PC-9 (cell line): ENCODE measurements at regions of chr16 and their contacts with region 1.

Region 1: GRCh38 chr16:6663668-6664067 is 669.0 kb upstream of the RBFOX1 start:
- DNase-seq: no peak
- H3K4me3 ChIP-seq: no peak overlapping the region
- H3K27ac ChIP-seq: no peak overlapping the region
- H3K4me1 ChIP-seq: no peaks in the 10 kb centered on the region
- H3K27me3 ChIP-seq: peaks cover 41% of the 10 kb centered on the region
- CTCF ChIP-seq: no peak

Region 2: DNA sequence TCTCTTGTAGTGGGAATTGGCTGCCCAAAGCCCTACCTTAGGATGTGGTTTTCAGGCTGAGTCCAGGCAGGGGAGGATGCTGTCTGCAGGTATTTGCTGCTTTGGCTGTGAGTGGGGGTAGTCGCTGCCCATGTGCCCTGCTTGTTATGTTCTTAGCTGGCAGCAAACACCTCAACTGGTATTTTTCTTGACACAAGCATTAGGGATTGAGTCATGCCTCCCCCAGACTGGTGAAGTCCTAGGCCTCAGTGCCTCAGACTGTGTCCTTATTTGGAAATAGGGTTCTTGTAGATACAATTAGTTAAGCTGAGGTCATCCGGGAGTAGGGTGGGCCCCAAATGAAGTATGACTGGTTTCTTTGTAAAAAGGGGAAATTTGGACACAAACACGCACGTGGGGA is 757.7 kb before region 1 on chr16:
- CTCF ChIA-PET with region 1: no interaction called
- POLR2A ChIA-PET with region 1: no interaction called
- intact Hi-C with region 1: no loop called
- DNase-seq: no peak
- H3K4me3 ChIP-seq: no peak overlapping the region
- H3K27ac ChIP-seq: no peak overlapping the region
- H3K4me1 ChIP-seq: no peaks in the 10 kb centered on the region
- H3K27me3 ChIP-seq: peaks cover 21% of the 10 kb centered on the region
- CTCF ChIP-seq: no peak

Region 3: DNA sequence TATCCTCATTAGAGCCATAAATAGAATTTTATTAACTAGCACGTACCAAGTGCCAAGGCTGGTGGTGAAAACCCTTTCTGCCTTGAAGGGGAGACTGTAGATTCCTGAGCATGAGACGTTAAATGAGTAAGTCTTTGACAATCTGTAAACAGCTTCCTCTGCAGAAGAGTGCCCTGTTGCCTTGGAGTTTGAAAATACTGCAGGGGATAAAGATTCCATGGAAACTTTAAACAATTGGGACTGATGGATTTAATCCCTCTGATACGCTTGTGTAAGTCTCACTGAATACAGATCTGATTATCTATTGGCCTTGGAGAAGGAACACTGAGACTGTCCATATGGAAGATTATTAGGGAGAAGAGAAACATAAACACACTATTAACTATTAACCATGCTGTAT is 384.4 kb before region 1 on chr16:
- CTCF ChIA-PET with region 1: no interaction called
- POLR2A ChIA-PET with region 1: interaction called, 13 read pairs
- intact Hi-C with region 1: no loop called
- DNase-seq: no peak
- H3K4me3 ChIP-seq: no peak overlapping the region
- H3K27ac ChIP-seq: no peak overlapping the region
- H3K4me1 ChIP-seq: no peaks in the 10 kb centered on the region
- H3K27me3 ChIP-seq: peaks cover 58% of the 10 kb centered on the region
- CTCF ChIP-seq: no peak

Region 4: GRCh38 chr16:6593799-6594198 is 69.9 kb before region 1 on chr16:
- CTCF ChIA-PET with region 1: no interaction called
- POLR2A ChIA-PET with region 1: interaction called, 24 read pairs
- intact Hi-C with region 1: no loop called
- DNase-seq: no peak
- H3K4me3 ChIP-seq: no peak overlapping the region
- H3K27ac ChIP-seq: no peak overlapping the region
- H3K4me1 ChIP-seq: no peaks in the 10 kb centered on the region
- H3K27me3 ChIP-seq: peaks cover 8% of the 10 kb centered on the region; the same call in 1 of the 2 replicates
- CTCF ChIP-seq: no peak

Region 5: GRCh38 chr16:6732166-6732565 is 68.5 kb after region 1 on chr16:
- CTCF ChIA-PET with region 1: no interaction called
- POLR2A ChIA-PET with region 1: no interaction called
- intact Hi-C with region 1: no loop called
- DNase-seq: no peak
- H3K4me3 ChIP-seq: no peak overlapping the region
- H3K27ac ChIP-seq: no peak overlapping the region
- H3K4me1 ChIP-seq: no peaks in the 10 kb centered on the region
- H3K27me3 ChIP-seq: peaks cover 8% of the 10 kb centered on the region; the same call in 1 of the 2 replicates
- CTCF ChIP-seq: no peak

Region 6: DNA sequence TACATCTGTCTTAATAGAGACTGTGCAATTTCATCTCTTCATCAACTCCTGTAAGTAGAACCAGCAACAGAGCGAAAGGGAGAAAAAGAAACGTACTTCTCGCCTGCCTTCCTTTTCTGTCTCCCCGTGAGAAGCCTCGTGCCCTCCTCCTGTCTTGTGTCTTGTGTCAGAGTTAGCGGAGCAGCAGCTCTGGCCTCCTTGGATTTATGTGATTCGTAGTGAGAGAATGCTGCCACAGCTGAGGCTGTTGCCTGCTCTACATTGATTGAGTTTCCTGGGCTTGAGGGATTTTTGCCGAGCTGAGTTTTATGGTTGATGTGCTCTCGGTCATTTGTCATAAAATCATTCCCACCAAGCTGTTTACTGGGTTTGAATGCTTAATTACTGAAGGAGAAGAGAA is 89.9 kb after region 1 on chr16:
- CTCF ChIA-PET with region 1: no interaction called
- POLR2A ChIA-PET with region 1: no interaction called
- intact Hi-C with region 1: no loop called
- DNase-seq: no peak
- H3K4me3 ChIP-seq: no peak overlapping the region
- H3K27ac ChIP-seq: no peak overlapping the region
- H3K4me1 ChIP-seq: no peaks in the 10 kb centered on the region
- H3K27me3 ChIP-seq: peaks cover 6% of the 10 kb centered on the region; the same call in 1 of the 2 replicates
- CTCF ChIP-seq: no peak